ENCODE measurements at regions of chr2 and their contacts with region 1.

Region 1: DNA sequence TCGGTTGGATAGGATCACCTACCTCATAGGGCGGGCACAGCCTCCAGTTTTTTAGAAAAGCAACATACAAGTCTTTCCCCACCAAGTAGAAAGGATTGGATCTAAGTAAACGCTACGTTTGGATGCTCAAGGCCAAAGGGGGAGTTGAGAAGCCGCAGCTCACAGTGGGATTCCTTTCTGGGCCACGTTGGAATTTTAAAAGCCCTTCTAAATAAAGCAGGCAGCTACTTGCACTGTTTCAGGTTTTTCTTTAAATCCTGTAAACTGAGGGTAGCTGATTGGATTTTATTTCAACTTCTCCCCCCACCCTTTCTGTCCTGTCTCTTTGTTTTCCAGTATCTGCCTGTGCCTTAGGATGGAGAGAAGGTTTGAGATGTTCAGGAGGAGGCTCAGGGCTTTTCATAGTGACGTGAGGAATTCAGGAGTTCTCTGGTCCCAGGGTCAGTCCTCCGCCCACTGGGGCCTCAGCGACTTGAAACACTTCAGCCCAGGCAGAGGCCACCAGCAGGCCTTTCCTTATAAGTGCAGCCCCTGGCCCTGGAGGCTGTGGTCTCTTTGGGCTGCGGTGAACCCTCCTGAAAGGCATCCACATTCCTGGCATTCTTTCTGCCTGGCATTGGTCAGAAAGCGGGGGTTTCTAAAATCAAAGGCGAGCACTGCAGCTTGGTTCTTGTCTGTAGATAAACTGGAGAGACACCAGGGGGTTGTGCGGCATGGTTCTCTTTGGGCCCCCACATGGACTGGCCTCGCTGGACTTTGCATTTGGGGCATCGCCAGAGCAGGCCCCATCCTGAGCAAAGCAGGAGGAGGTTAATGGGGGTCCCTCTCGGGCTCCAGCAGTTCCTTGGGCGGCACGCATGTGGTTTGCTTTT is 44.5 kb downstream of the SH3BP4 start:
- DNase-seq: no peak
- H3K4me3 ChIP-seq: peak overlapping the region; percentile 11 to 17
- H3K27ac ChIP-seq: peak overlapping the region; percentile 70 to 84
- H3K4me1 ChIP-seq: peaks cover 4 to 65% (median 50%) of the 10 kb centered on the region in 4 donors
- H3K27me3 ChIP-seq: no peaks in the 10 kb centered on the region
- CTCF ChIP-seq: no peak

Region 2: GRCh38 chr2:234670052-234670451 is 326.3 kb before region 1 on chr2:
- intact Hi-C with region 1: no loop called
- DNase-seq: no peak
- H3K4me3 ChIP-seq: no peak overlapping the region
- H3K27ac ChIP-seq: no peak overlapping the region
- H3K4me1 ChIP-seq: peaks cover 0 to 8% (median 0%) of the 10 kb centered on the region in 4 donors
- H3K27me3 ChIP-seq: no peaks in the 10 kb centered on the region
- CTCF ChIP-seq: no peak

Region 3: DNA sequence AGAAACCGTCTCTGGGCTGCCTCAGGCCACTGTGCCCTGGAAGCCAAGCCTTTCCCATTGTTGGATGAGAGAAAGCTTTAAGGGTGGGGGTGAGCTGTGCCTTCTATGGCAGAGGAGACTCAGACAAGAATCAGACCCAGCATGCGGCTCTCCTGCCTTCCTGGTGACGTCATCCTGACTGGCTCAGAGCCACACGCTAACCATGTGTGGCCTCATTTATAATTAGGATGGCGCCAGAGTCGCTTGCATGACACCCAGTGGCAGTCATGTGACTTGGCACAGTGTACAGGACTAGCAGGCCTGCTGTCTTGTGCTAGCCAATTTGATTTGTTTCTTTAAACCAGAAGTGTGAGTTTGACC is 54.7 kb after region 1 on chr2:
- intact Hi-C with region 1: loop called (anchors 2 kb)
- DNase-seq: peak; percentile 91 to 96
- H3K4me3 ChIP-seq: no peak overlapping the region
- H3K27ac ChIP-seq: peak overlapping the region; percentile 64 to 69
- H3K4me1 ChIP-seq: peaks cover 0 to 31% (median 21%) of the 10 kb centered on the region in 4 donors
- H3K27me3 ChIP-seq: no peaks in the 10 kb centered on the region
- CTCF ChIP-seq: no peak

Region 4: DNA sequence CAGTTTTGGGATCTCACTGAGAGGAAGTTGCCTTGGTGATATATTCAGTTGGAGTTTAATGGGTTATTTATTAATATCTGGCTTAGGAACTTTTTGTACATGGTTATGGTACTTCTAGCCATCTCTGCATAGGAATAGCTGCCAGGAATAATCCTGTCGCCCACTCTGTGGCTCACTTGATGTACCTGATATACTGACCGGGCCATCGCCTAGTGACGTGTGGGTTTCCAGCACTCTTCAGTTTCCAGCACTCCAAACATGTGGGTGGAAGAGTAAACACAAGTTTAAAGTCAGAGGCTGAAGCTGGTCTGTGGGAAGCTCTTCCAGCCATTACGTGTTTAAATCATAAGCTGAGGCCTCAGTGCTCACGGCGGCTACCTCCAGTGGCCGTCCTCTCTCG is 453.3 kb after region 1 on chr2:
- intact Hi-C with region 1: no loop called
- DNase-seq: no peak
- H3K4me3 ChIP-seq: no peak overlapping the region
- H3K27ac ChIP-seq: no peak overlapping the region
- H3K4me1 ChIP-seq: no peaks in the 10 kb centered on the region
- H3K27me3 ChIP-seq: peaks cover 0 to 2% of the 10 kb centered on the region in 2 donors
- CTCF ChIP-seq: no peak